Posterior cingulate gyrus (tissue), 11 donors: ENCODE measurements at regions of chrX and their contacts with region 1.

Region 1: GRCh38 chrX:103533511-103534216 is 14.4 kb upstream of the RAB40A start:
- DNase-seq: peak; percentile 60 to 96 (median 78)

Region 2: DNA sequence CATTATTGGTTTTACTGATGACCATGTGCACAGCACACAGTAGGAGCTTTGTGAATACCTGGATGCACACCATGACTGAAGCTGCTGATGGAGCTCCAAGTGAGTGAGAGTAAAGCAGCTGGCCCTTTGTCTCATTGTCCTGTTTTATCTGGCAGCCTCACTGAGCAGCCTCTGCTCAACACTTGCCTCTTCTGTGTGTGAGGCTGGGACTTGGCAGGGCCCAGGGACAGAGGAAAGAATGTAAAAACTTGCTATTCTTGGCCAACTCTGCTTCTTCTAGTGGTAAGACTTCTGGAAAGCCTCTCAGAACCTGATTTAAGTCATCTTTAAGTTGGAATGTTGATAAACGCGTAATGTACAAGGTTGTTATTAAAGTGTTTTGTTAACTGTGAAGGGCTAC is 531.1 kb before region 1 on chrX:
- intact Hi-C with region 1: no loop called
- DNase-seq: no peak

Region 3: DNA sequence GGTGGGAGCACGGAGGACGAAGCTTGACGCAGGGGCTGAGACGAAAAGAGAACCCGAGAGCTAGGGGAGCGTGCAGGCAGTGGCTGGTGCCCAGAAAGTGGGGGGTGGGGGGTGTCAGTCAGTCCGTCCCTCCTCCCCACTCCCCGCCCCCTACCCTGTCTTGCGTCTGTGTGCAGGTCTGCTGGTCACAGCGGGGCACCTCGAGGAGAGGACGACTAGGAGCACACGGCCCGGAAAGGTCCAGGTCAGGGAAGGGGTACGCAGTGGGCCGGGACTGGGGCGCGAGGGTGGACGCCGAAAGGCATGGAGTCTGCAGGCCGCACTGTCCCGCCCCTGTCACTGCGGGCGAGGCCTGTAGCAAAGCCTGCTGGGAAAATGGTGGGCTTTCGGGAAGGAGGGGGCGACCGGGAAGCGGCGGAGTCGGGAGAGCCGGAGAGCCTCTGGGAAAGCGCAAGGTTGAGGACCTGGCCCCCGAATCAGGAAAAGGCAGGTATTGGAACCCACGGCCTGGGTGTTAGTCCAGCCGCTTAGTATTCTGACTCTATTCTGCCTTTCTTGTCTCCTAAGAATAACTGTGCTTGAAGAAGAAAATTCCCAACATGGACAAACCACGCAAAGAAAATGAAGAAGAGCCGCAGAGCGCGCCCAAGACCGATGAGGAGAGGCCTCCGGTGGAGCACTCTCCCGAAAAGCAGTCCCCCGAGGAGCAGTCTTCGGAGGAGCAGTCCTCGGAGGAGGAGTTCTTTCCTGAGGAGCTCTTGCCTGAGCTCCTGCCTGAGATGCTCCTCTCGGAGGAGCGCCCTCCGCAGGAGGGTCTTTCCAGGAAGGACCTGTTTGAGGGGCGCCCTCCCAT is 95.9 kb after region 1 on chrX:
- intact Hi-C with region 1: loop called (anchors 10 kb)
- DNase-seq: peak; percentile 52 to 95 (median 67)

Region 4: GRCh38 chrX:103817502-103817901 is 283.8 kb after region 1 on chrX:
- intact Hi-C with region 1: loop called (anchors 5 kb)
- DNase-seq: no peak

Region 5: DNA sequence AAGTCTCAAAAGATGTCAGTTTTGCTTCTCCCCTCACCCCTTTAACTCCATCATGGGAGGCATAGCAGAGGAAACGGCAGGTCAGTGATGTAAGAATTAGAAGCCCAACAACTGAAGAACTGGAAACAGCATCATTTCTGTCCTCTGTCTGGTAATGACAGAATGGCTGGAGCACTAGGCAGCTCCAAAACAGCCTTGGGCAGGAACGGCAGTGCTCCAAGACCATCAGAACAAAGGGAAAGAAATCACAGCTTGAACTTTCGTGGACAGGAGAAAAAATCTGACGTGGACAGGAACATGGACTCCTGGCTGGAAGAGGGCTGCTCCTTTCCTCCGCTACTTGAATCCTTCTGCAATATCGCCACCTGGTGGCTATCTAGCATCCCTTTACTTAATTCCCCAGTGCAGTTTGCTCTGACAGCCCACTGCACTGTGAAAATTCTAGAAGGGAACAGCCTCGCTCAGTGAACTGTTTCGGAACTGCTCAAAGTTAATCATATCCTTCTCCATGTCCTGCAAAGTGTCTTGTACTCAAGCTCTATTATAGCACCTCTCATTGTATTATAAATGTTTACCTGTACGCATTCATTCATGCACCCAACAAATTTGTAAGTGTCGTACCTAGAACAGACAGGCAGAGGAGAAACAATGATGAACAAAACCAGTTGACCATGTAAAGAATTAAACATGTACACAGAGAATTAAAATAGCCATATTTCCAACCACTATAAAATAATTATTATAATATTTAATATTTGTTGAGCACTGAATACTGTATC is 602.8 kb after region 1 on chrX:
- intact Hi-C with region 1: loop called (anchors 5 kb)
- DNase-seq: peak in 7 of 10 donors; percentile 49 to 91 (median 69)